Stomach (tissue), 19 donors: ENCODE measurements at regions of chr9 and their contacts with region 1.

Region 1: GRCh38 chr9:96854073-96854876 is at the start of gene ZNF782:
- DNase-seq: peak; percentile 92 to 98
- H3K4me3 ChIP-seq: peak within 1 kb of the TSS; percentile 75 to 96 (median 86)
- H3K27ac ChIP-seq: peak within 1 kb of the TSS; percentile 67 to 90 (median 85)
- H3K4me1 ChIP-seq: peaks cover 12 to 51% (median 27%) of the 10 kb centered on the region in 4 donors
- H3K27me3 ChIP-seq: no peaks in the 10 kb centered on the region
- CTCF ChIP-seq: no peak
- EP300 ChIP-seq: no peak
- POLR2A ChIP-seq: no peak
- total RNA-seq, gene ZNF782: 10.7 to 32.7 (median 18.0) TPM

Region 2: DNA sequence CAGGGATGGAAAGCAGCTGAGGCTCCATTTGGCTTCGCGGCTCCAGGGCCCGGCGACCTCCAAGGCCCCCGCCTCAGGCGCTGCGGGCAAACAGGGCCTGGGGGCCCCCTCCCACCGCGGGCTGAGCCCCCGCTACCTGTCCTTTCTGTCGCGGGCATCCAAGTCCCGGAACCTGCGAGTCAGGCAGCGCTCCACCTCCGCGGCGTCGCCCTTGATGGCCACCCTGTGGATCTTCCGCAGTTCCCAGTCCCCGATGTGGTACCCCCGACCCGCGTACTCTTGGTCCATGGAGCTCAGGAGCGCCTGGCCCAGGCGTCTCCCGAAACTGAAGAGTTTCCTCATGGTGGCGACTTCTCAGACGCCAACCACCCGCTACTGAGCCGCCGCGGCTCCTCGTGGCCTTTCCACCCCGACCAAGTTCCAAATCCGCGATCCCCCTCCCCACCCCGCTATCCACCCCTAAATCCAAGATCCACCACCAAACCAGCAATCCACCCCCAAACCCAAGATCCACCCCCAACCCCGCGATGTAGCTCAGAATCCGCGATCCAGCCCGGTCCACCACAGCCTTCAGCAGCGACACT is 366.7 kb after region 1 on chr9:
- intact Hi-C with region 1: no loop called
- DNase-seq: peak in 1 of 2 donors; percentile 11
- H3K4me3 ChIP-seq: peak overlapping the region; percentile 34 to 45 (median 40)
- H3K27ac ChIP-seq: no peak overlapping the region
- H3K4me1 ChIP-seq: peaks cover 18 to 21% (median 18%) of the 10 kb centered on the region in 4 donors
- H3K27me3 ChIP-seq: peaks cover 0 to 65% (median 36%) of the 10 kb centered on the region in 3 donors
- CTCF ChIP-seq: no peak
- EP300 ChIP-seq: no peak
- POLR2A ChIP-seq: no peak

Region 3: DNA sequence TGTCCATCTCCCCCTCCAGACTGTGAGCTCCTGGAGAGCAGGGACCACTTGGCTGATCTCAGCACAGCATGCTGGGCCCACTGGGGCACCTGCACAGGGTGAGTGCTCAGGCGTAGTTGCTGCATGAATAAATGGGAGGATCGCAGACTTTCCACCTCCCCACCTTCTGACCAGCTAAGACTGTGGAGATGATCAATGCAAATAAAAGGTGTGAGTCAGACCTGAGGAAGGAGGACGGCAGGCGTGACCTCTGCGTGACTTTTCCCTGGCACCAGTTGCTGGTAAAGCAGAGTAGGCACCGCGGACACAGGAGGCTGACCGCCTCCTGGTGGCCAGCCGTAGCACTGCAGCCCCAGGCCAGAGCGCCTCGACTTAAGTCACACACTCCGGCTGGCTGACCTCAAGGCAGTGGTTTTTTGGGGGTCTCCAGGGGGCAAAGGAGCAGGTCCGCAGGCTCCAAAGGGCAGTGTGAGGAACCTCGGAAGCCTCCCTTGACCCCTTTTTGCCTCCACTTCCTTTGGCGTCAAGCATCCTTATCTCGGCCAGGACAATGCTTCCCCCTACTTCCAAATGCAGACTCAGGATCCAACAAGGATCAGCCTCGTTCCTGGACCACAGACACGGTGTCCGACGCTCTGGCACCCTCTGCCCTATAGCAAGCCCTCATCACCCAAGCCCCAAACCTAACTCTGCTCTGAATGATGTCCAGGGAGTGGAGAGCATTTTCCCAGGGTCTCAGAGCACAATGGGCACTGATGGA is 544.9 kb after region 1 on chr9:
- intact Hi-C with region 1: loop called (anchors 10 kb)
- DNase-seq: peak; percentile 89 to 90
- H3K4me3 ChIP-seq: no peak overlapping the region
- H3K27ac ChIP-seq: no peak overlapping the region
- H3K4me1 ChIP-seq: peaks cover 0 to 7% (median 6%) of the 10 kb centered on the region in 4 donors
- H3K27me3 ChIP-seq: no peaks in the 10 kb centered on the region
- CTCF ChIP-seq: peak in 5 of 7 experiments; percentile 69 to 99 (median 88)
- EP300 ChIP-seq: no peak
- POLR2A ChIP-seq: no peak